Calu3 (cell line): ENCODE measurements at regions of chr4 and their contacts with region 1.

Region 1: DNA sequence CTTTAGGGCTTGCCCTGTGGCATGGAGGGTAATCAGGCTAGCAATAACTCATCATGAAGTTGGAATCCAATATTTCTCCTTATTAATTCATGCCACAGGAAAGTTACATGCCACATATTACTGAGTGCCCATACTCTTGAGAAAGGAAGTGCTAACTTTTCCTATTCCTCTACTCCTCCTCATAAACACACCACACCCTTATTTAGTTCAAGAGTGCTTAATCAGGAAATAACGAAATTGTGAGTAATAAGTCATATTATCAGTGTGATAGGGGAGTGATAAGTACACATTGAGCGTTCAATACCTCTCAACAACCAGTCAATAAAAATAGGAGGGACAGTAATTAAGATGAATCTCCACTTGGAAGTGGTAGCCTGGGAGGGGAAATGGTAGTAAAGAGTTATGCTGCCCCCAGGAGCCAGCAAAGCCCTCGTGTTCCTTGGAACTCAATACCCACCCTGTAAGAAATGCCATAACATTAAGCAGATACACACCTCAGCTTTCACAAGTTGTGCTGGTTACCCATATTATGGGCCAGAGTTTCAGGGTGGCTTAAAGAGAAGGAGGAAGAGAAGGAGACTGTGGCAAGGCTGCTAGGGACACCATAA is 410.0 kb upstream of the NR3C2 start:
- DNase-seq: peak; percentile 31
- H3K4me3 Mint-ChIP-seq: no peak overlapping the region
- H3K27ac Mint-ChIP-seq: peak overlapping the region; percentile 66
- H3K4me1 Mint-ChIP-seq: peaks cover 49% of the 10 kb centered on the region
- H3K27me3 Mint-ChIP-seq: no peaks in the 10 kb centered on the region
- CTCF ChIP-seq: no peak

Region 2: DNA sequence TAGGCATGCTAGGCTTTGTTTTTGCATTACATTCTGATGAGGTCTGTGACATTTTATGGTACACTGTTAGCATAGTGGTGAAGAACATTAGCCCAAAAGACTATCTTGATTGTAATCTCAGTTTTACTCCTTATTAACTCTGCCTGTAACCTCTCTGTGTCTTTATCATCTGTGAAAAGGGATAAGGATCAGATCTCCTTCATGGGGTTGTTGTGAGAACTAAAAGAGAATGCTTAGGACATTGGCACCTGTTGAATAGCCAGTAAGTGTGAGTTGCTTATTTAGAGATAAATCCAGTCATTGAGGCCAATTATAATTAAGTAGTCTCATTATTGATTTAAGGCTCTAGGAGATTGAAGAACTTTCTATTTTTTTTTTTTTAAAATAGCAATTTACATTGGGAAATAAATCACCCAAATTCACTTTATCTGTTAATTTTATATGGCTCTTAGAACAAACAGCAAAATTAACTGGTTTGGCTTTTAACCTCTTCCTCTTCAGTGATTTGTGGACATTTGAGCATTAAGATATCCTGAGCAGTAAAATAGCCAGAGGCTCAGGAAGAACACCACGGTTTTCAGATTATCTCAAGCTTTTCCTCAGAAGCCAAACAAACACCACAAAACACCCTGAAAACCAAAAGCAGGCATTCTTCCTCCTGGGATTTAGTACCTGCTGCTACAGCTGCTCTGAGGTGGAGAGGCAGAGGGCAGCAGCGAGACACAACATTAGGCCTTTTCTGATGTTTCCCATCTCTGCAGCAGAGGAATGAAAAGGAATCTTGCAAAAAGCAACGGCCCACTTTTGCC is 927.4 kb before region 1 on chr4:
- CTCF ChIA-PET with region 1: interaction called, 3 read pairs
- intact Hi-C with region 1: loop called (anchors 2 kb)
- DNase-seq: peak; percentile 36
- H3K4me3 Mint-ChIP-seq: no peak overlapping the region
- H3K27ac Mint-ChIP-seq: no peak overlapping the region
- H3K4me1 Mint-ChIP-seq: no peaks in the 10 kb centered on the region
- H3K27me3 Mint-ChIP-seq: no peaks in the 10 kb centered on the region
- CTCF ChIP-seq: no peak

Region 3: GRCh38 chr4:148776941-148777340 is 75.3 kb before region 1 on chr4:
- CTCF ChIA-PET with region 1: no interaction called
- intact Hi-C with region 1: no loop called
- DNase-seq: no peak
- H3K4me3 Mint-ChIP-seq: no peak overlapping the region
- H3K27ac Mint-ChIP-seq: no peak overlapping the region
- H3K4me1 Mint-ChIP-seq: peaks cover 3% of the 10 kb centered on the region
- H3K27me3 Mint-ChIP-seq: no peaks in the 10 kb centered on the region
- CTCF ChIP-seq: no peak

Region 4: GRCh38 chr4:148795156-148795864 is 56.9 kb before region 1 on chr4:
- CTCF ChIA-PET with region 1: no interaction called
- intact Hi-C with region 1: loop called (anchors 2 kb)
- DNase-seq: peak; percentile 66
- H3K4me3 Mint-ChIP-seq: peak overlapping the region; percentile 3
- H3K27ac Mint-ChIP-seq: peak overlapping the region; percentile 45
- H3K4me1 Mint-ChIP-seq: peaks cover 45% of the 10 kb centered on the region
- H3K27me3 Mint-ChIP-seq: no peaks in the 10 kb centered on the region
- CTCF ChIP-seq: no peak

Region 5: DNA sequence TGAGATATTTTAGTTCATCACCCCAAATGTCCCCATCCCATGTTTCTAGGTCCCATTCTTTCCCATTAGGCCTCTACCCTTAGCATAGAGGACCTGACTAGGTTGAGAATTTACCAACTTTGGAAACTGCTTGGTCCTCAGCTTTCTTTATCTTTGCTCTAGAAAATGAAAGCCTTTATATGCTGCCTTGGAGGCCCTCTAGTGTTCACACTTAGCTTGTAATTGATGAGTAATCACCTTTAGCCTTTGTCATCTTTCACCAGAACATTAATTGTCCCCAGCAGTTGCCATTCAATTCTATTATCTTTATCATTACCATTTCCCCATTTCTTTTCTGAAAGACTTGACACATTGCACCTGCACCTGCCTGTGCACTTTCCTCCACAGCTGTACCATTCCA is 179.2 kb after region 1 on chr4:
- CTCF ChIA-PET with region 1: no interaction called
- intact Hi-C with region 1: loop called (anchors 5 kb)
- DNase-seq: no peak
- H3K4me3 Mint-ChIP-seq: no peak overlapping the region
- H3K27ac Mint-ChIP-seq: no peak overlapping the region
- H3K4me1 Mint-ChIP-seq: no peaks in the 10 kb centered on the region
- H3K27me3 Mint-ChIP-seq: no peaks in the 10 kb centered on the region
- CTCF ChIP-seq: peak; percentile 19

Region 6: GRCh38 chr4:149264093-149264733 is 412.0 kb after region 1 on chr4:
- CTCF ChIA-PET with region 1: no interaction called
- intact Hi-C with region 1: loop called (anchors 5 kb)
- DNase-seq: peak; percentile 30
- H3K4me3 Mint-ChIP-seq: no peak overlapping the region
- H3K27ac Mint-ChIP-seq: no peak overlapping the region
- H3K4me1 Mint-ChIP-seq: no peaks in the 10 kb centered on the region
- H3K27me3 Mint-ChIP-seq: no peaks in the 10 kb centered on the region
- CTCF ChIP-seq: no peak